CD8-positive, alpha-beta T cell (primary cell): ENCODE measurements at regions of chr3 and their contacts with region 1.

Region 1: GRCh38 chr3:101573449-101574387 is at the start of gene PCNP:
- DNase-seq: peak; percentile 98 to 100 (median 99)
- ATAC-seq: peak; percentile 82
- H3K4me3 ChIP-seq: peak within 1 kb of the TSS; percentile 83 to 96
- H3K4me3 Mint-ChIP-seq: peak within 1 kb of the TSS; percentile 95
- H3K27ac ChIP-seq: peak within 1 kb of the TSS; percentile 98 to 99
- H3K27ac Mint-ChIP-seq: peak within 1 kb of the TSS; percentile 99
- H3K4me1 ChIP-seq: peaks cover 56% of the 10 kb centered on the region
- H3K4me1 Mint-ChIP-seq: peaks cover 73% of the 10 kb centered on the region
- H3K27me3 ChIP-seq: no peaks in the 10 kb centered on the region
- H3K27me3 Mint-ChIP-seq: no peaks in the 10 kb centered on the region
- CTCF ChIP-seq: peak; percentile 85
- total RNA-seq, gene PCNP: 175 to 189 TPM

Region 2: GRCh38 chr3:100400780-100401673 is 1172.7 kb before region 1 on chr3 and contains the starts of genes LNP1 and TOMM70:
- CTCF ChIA-PET with region 1: no interaction called
- POLR2A ChIA-PET with region 1: no interaction called
- intact Hi-C with region 1: loop called (anchors 1 to 10 kb)
- DNase-seq: peak; percentile 85 to 97 (median 94)
- ATAC-seq: peak; percentile 85
- H3K4me3 ChIP-seq: peak within 1 kb of the TSS; percentile 76 to 92
- H3K4me3 Mint-ChIP-seq: peak within 1 kb of the TSS; percentile 98
- H3K27ac ChIP-seq: peak within 1 kb of the TSS; percentile 77 to 92
- H3K27ac Mint-ChIP-seq: peak within 1 kb of the TSS; percentile 99
- H3K4me1 ChIP-seq: peaks cover 46% of the 10 kb centered on the region
- H3K4me1 Mint-ChIP-seq: peaks cover 73% of the 10 kb centered on the region
- H3K27me3 ChIP-seq: no peaks in the 10 kb centered on the region
- H3K27me3 Mint-ChIP-seq: no peaks in the 10 kb centered on the region
- CTCF ChIP-seq: no peak
- total RNA-seq, gene LNP1: 1.1 to 1.2 TPM
- total RNA-seq, gene TOMM70: 27.7 to 30.5 TPM

Region 3: GRCh38 chr3:101518421-101518871 is 55.3 kb before region 1 on chr3:
- CTCF ChIA-PET with region 1: interaction called, 3 read pairs
- POLR2A ChIA-PET with region 1: interaction called, 19 read pairs
- intact Hi-C with region 1: loop called in 1 of 2 experiments (anchors 1 kb)
- DNase-seq: peak in 7 of 9 experiments; percentile 2 to 84 (median 28)
- ATAC-seq: peak; percentile 85
- H3K4me3 ChIP-seq: no peak overlapping the region
- H3K4me3 Mint-ChIP-seq: peak overlapping the region; percentile 6
- H3K27ac ChIP-seq: peak overlapping the region; percentile 24 to 78
- H3K27ac Mint-ChIP-seq: peak overlapping the region; percentile 96
- H3K4me1 ChIP-seq: peaks cover 53% of the 10 kb centered on the region
- H3K4me1 Mint-ChIP-seq: peaks cover 60% of the 10 kb centered on the region
- H3K27me3 ChIP-seq: no peaks in the 10 kb centered on the region
- H3K27me3 Mint-ChIP-seq: no peaks in the 10 kb centered on the region
- CTCF ChIP-seq: no peak

Region 4: GRCh38 chr3:101635954-101636798 is 62.5 kb after region 1 on chr3:
- CTCF ChIA-PET with region 1: interaction called, 5 read pairs
- POLR2A ChIA-PET with region 1: no interaction called
- intact Hi-C with region 1: loop called (anchors 2 to 5 kb)
- DNase-seq: peak; percentile 48 to 74 (median 70)
- ATAC-seq: peak; percentile 94
- H3K4me3 ChIP-seq: no peak overlapping the region
- H3K4me3 Mint-ChIP-seq: no peak overlapping the region
- H3K27ac ChIP-seq: no peak overlapping the region
- H3K27ac Mint-ChIP-seq: no peak overlapping the region
- H3K4me1 ChIP-seq: no peaks in the 10 kb centered on the region
- H3K4me1 Mint-ChIP-seq: peaks cover 4% of the 10 kb centered on the region
- H3K27me3 ChIP-seq: no peaks in the 10 kb centered on the region
- H3K27me3 Mint-ChIP-seq: no peaks in the 10 kb centered on the region
- CTCF ChIP-seq: peak; percentile 68

Region 5: GRCh38 chr3:101676765-101677435 is 103.2 kb after region 1 on chr3 and contains the start of gene ZBTB11:
- CTCF ChIA-PET with region 1: interaction called, 17 read pairs
- POLR2A ChIA-PET with region 1: interaction called, 29 read pairs
- intact Hi-C with region 1: loop called (anchors 1 kb)
- DNase-seq: peak; percentile 99 to 100 (median 100)
- ATAC-seq: peak; percentile 63
- H3K4me3 ChIP-seq: peak within 1 kb of the TSS; percentile 90 to 100
- H3K4me3 Mint-ChIP-seq: peak within 1 kb of the TSS; percentile 95
- H3K27ac ChIP-seq: peak within 1 kb of the TSS; percentile 97 to 99
- H3K27ac Mint-ChIP-seq: peak within 1 kb of the TSS; percentile 98
- H3K4me1 ChIP-seq: peaks cover 26% of the 10 kb centered on the region
- H3K4me1 Mint-ChIP-seq: peaks cover 49% of the 10 kb centered on the region
- H3K27me3 ChIP-seq: no peaks in the 10 kb centered on the region
- H3K27me3 Mint-ChIP-seq: no peaks in the 10 kb centered on the region
- CTCF ChIP-seq: no peak
- total RNA-seq, gene ZBTB11: 69.6 to 75.2 TPM

Region 6: GRCh38 chr3:101724329-101725193 is 150.8 kb after region 1 on chr3 and contains the start of gene CEP97:
- CTCF ChIA-PET with region 1: no interaction called
- POLR2A ChIA-PET with region 1: interaction called, 3 read pairs
- intact Hi-C with region 1: loop called in 1 of 2 experiments (anchors 1 kb)
- DNase-seq: peak; percentile 67 to 92 (median 87)
- ATAC-seq: peak; percentile 94
- H3K4me3 ChIP-seq: peak within 1 kb of the TSS; percentile 82 to 99
- H3K4me3 Mint-ChIP-seq: peak within 1 kb of the TSS; percentile 100
- H3K27ac ChIP-seq: peak within 1 kb of the TSS; percentile 62 to 83
- H3K27ac Mint-ChIP-seq: peak within 1 kb of the TSS; percentile 98
- H3K4me1 ChIP-seq: peaks cover 29% of the 10 kb centered on the region
- H3K4me1 Mint-ChIP-seq: peaks cover 37% of the 10 kb centered on the region
- H3K27me3 ChIP-seq: no peaks in the 10 kb centered on the region
- H3K27me3 Mint-ChIP-seq: no peaks in the 10 kb centered on the region
- CTCF ChIP-seq: no peak
- total RNA-seq, gene CEP97: 3.4 to 5.3 TPM

Region 7: DNA sequence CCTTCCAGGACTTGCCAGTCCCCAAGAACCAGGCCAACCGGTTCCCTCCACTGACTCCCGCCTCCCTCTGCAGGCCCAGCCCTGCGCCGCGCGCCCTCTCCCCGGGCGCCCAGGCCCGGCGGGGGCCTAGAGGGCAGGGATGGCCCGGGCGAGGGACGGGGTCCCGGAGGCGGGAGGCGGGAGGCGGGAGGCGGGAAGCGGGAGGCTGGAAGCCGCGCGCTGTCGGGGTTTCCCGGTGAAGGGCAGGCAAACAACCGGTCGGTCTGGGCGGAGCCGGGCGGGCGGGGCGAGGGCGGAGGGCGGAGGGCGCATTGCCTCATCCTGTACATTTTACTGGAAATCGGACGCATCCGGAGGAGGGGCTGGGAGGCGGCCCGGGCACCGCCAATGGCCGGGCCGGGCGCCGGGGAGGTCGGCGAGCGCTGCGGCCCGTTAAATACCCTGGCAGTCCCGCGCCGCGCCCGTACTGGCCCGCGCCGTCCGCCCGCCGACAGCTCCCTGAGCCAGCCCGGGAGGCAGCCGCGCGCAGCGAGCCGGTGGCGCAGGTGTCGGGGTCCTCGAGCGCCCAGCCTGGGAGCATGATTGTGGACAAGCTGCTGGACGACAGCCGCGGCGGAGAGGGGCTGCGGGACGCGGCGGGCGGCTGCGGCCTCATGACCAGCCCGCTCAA is 275.5 kb after region 1 on chr3 and contains the start of gene NFKBIZ:
- CTCF ChIA-PET with region 1: no interaction called
- POLR2A ChIA-PET with region 1: interaction called, 8 read pairs
- intact Hi-C with region 1: loop called (anchors 5 to 10 kb)
- DNase-seq: peak; percentile 85 to 96 (median 91)
- ATAC-seq: peak; percentile 73
- H3K4me3 ChIP-seq: peak within 1 kb of the TSS; percentile 75 to 92
- H3K4me3 Mint-ChIP-seq: peak within 1 kb of the TSS; percentile 96
- H3K27ac ChIP-seq: peak within 1 kb of the TSS; percentile 94 to 96
- H3K27ac Mint-ChIP-seq: peak within 1 kb of the TSS; percentile 97
- H3K4me1 ChIP-seq: peaks cover 30% of the 10 kb centered on the region
- H3K4me1 Mint-ChIP-seq: peaks cover 39% of the 10 kb centered on the region
- H3K27me3 ChIP-seq: no peaks in the 10 kb centered on the region
- H3K27me3 Mint-ChIP-seq: no peaks in the 10 kb centered on the region
- CTCF ChIP-seq: no peak
- total RNA-seq, gene NFKBIZ: 460 to 477 TPM